Vagina (tissue), 2 donors: ENCODE measurements at regions of chr5 and their contacts with region 1.

Region 1: GRCh38 chr5:32489791-32490582 is 45.4 kb upstream of the ZFR start:
- DNase-seq: no peak
- H3K4me3 ChIP-seq: no peak overlapping the region
- H3K27ac ChIP-seq: peak overlapping the region; percentile 48
- H3K4me1 ChIP-seq: no peaks in the 10 kb centered on the region
- H3K27me3 ChIP-seq: no peaks in the 10 kb centered on the region
- CTCF ChIP-seq: peak; percentile 58 to 78 (median 59)
- POLR2A ChIP-seq: no peak

Region 2: GRCh38 chr5:32613050-32613672 is 123.2 kb after region 1 on chr5:
- intact Hi-C with region 1: loop called (anchors 5 kb)
- DNase-seq: no peak
- H3K4me3 ChIP-seq: no peak overlapping the region
- H3K27ac ChIP-seq: no peak overlapping the region
- H3K4me1 ChIP-seq: no peaks in the 10 kb centered on the region
- H3K27me3 ChIP-seq: no peaks in the 10 kb centered on the region
- CTCF ChIP-seq: peak; percentile 78 to 94 (median 86)
- POLR2A ChIP-seq: no peak